ENCODE measurements at regions of chr3 and their contacts with region 1.

Region 1: DNA sequence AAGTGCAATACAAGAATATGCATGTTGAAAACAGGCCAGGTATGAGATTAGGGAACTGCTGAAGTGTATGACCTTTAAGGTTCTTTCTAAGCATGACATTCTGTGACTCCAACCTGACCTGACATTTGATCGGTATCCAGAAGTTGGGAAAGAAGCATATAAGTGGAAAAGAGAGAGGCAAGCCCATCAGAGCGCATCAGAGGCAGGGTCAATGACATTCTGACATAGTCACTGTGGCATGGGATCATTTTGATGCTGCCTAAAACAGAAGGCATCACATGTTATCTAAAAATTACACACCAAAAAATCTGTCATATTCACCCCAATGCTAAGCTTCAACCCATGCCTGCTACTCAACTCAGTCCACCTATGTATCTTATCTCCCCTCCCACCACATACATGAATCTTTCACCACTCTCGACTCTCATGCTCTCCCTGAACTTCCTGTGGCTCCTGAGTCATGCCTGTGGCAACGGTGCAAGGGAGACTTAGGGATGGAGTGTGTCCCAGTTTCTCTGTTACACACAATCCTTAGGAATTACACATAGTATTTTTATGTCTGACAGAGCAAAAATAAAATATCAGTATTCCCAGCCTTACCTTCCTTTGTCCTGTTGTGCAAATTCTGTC is 20.5 kb upstream of the LRRN1 start:
- DNase-seq: no peak
- ATAC-seq: no peak
- H3K4me3 ChIP-seq: no peak overlapping the region
- H3K4me3 Mint-ChIP-seq: no peak overlapping the region
- H3K27ac ChIP-seq: no peak overlapping the region
- H3K27ac Mint-ChIP-seq: no peak overlapping the region
- H3K4me1 ChIP-seq: no peaks in the 10 kb centered on the region
- H3K4me1 Mint-ChIP-seq: no peaks in the 10 kb centered on the region
- H3K27me3 ChIP-seq: no peaks in the 10 kb centered on the region
- H3K27me3 Mint-ChIP-seq: no peaks in the 10 kb centered on the region

Region 2: DNA sequence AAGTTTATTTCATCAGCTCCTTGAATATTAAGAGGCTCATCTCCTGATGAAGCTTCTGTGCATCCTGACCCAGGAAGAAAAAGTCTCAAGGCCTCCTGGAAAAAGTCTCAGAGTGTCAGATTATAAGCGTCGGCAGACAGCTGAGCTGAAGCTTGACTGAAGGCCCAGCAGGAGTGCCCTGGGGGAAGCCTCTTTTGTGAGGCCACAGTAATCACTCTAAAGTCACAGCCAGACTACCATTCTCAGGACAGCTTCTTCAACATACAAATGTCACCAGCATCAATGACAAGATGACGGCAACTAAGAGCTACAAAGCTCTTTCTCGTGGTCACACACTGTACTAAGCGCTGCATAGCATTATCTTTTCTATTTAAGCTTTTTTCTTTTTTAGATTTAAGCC is 52.2 kb before region 1 on chr3:
- CTCF ChIA-PET with region 1: no interaction called
- POLR2A ChIA-PET with region 1: no interaction called
- intact Hi-C with region 1: loop called in 1 of 2 experiments (anchors 2 kb)
- DNase-seq: no peak
- ATAC-seq: no peak
- H3K4me3 ChIP-seq: no peak overlapping the region
- H3K4me3 Mint-ChIP-seq: no peak overlapping the region
- H3K27ac ChIP-seq: no peak overlapping the region
- H3K27ac Mint-ChIP-seq: no peak overlapping the region
- H3K4me1 ChIP-seq: no peaks in the 10 kb centered on the region
- H3K4me1 Mint-ChIP-seq: no peaks in the 10 kb centered on the region
- H3K27me3 ChIP-seq: no peaks in the 10 kb centered on the region
- H3K27me3 Mint-ChIP-seq: no peaks in the 10 kb centered on the region

Region 3: GRCh38 chr3:3765661-3766060 is 13.1 kb before region 1 on chr3:
- CTCF ChIA-PET with region 1: no interaction called
- POLR2A ChIA-PET with region 1: no interaction called
- intact Hi-C with region 1: no loop called
- DNase-seq: no peak
- ATAC-seq: no peak
- H3K4me3 ChIP-seq: no peak overlapping the region
- H3K4me3 Mint-ChIP-seq: no peak overlapping the region
- H3K27ac ChIP-seq: no peak overlapping the region
- H3K27ac Mint-ChIP-seq: no peak overlapping the region
- H3K4me1 ChIP-seq: no peaks in the 10 kb centered on the region
- H3K4me1 Mint-ChIP-seq: no peaks in the 10 kb centered on the region
- H3K27me3 ChIP-seq: no peaks in the 10 kb centered on the region
- H3K27me3 Mint-ChIP-seq: peaks cover 0 to 4% (median 0%) of the 10 kb centered on the region in 5 donors

Region 4: DNA sequence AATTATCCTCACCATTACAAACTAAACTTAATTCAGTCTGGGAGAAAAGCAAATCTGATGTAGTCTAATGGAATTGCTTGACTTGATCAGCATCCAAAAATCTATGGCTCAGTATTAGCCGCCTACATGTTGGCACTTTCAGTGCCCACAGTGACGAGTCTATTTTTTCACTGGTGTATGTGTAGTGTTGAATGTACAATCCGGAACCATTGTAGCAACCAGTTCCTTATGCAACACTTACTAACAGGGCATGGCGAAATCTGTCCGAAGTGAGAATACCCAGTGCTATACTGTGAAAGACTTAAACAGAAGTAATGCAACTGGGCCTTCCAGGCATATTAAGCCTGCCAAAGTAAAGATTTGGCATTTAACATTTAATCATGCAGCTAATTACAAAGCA is 39.1 kb after region 1 on chr3:
- CTCF ChIA-PET with region 1: no interaction called
- POLR2A ChIA-PET with region 1: no interaction called
- intact Hi-C with region 1: no loop called
- DNase-seq: no peak
- ATAC-seq: peak; percentile 80
- H3K4me3 ChIP-seq: no peak overlapping the region
- H3K4me3 Mint-ChIP-seq: no peak overlapping the region
- H3K27ac ChIP-seq: no peak overlapping the region
- H3K27ac Mint-ChIP-seq: no peak overlapping the region
- H3K4me1 ChIP-seq: no peaks in the 10 kb centered on the region
- H3K4me1 Mint-ChIP-seq: no peaks in the 10 kb centered on the region
- H3K27me3 ChIP-seq: no peaks in the 10 kb centered on the region
- H3K27me3 Mint-ChIP-seq: no peaks in the 10 kb centered on the region

Region 5: GRCh38 chr3:3992312-3992874 is 213.6 kb after region 1 on chr3:
- CTCF ChIA-PET with region 1: no interaction called
- POLR2A ChIA-PET with region 1: no interaction called
- intact Hi-C with region 1: no loop called
- DNase-seq: no peak
- ATAC-seq: no peak
- H3K4me3 ChIP-seq: no peak overlapping the region
- H3K4me3 Mint-ChIP-seq: no peak overlapping the region
- H3K27ac ChIP-seq: no peak overlapping the region
- H3K27ac Mint-ChIP-seq: no peak overlapping the region
- H3K4me1 ChIP-seq: no peaks in the 10 kb centered on the region
- H3K4me1 Mint-ChIP-seq: peaks cover 0 to 4% (median 0%) of the 10 kb centered on the region in 7 donors
- H3K27me3 ChIP-seq: no peaks in the 10 kb centered on the region
- H3K27me3 Mint-ChIP-seq: no peaks in the 10 kb centered on the region

Measured in naive thymus-derived CD4-positive, alpha-beta T cell (primary cell).